SK-N-SH (cell line): ENCODE measurements at regions of chr1 and their contacts with region 1.

Region 1: DNA sequence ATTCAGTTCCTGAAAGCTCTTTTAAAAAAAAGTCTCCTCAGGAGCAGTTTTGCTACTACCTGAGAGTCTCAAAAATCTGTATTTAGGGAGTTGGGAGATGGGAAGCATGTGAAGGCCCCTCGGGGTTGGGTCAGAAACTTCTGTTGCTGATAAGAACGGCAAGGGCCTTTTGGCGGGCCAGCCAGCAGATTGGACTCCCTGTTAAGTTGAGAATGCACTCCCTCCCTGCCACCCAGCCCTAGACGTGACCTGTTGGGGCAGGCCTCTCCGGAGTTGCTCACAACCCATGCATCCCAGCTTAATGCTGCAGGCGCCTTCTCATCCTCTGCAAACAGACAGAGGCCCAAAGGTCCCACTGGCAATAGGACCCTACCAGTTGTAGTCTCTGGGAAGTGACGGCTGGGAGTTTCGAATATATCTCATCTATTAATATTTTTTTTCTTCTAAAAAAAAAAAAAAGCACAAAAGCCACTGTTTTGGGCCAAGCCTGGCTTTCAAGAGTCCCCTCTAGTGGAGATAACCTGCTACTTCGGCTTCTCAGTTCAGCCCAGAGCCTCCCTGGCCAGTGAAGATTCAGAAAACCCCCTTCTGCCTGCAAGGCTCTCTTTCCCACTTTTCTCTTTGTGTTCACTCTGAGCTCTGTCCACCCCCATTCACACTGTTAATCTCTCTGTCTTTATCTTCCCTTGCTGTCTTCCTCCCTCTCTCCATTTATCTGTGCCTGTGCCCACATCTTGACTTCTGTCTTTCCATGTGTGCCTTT is 5.3 kb downstream of the PLXNA2 start:
- DNase-seq: peak; percentile 74
- H3K4me3 ChIP-seq: peak overlapping the region in 1 of 2 experiments; percentile 20; a peak in 1 of 4 replicates
- H3K27ac ChIP-seq: peak overlapping the region; percentile 30 to 42; a peak in 3 of 4 replicates
- H3K4me1 ChIP-seq: peaks cover 30 to 64% of the 10 kb centered on the region in 2 experiments; a peak in 3 of 4 replicates
- H3K27me3 ChIP-seq: no peaks in the 10 kb centered on the region
- CTCF ChIP-seq: peak; percentile 84
- EP300 ChIP-seq: no peak
- RAD21 ChIP-seq: peak; percentile 80

Region 2: DNA sequence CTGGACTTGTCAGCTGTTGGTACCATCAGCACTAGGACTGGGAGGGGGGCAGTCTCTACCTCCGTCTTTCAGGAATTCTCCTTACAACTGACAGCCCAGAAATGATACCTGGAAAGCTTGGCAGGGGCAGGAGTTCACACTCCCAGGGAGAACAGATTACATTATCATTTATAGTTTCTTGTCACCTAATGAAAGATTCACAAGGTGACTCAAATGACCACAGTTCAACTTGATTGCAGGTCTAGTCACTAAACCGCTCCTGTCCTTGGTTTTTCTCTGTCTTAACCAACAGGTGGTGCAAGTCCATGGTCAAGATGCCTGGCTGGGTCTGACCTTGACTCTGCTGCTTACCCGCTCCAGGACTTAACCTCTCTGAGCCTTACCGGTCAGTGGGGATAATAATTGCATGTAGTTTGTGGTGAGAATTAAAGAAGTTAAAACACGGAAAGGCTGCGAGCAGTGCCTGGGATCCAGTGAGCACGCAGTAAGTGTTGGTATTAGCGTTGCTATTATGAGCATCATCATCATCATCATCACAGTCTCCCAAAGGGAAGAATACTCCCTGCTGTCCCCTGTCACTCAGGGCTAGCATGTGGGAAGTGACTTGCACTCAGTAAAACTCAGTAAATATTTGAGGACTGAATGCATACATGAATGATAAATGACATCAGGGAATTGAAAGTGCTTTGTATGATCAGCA is 202.6 kb before region 1 on chr1:
- CTCF ChIA-PET with region 1: interaction called, 579 read pairs
- POLR2A ChIA-PET with region 1: no interaction called
- DNase-seq: peak; percentile 58
- H3K4me3 ChIP-seq: no peak overlapping the region
- H3K27ac ChIP-seq: no peak overlapping the region
- H3K4me1 ChIP-seq: peaks cover 0 to 4% of the 10 kb centered on the region in 2 experiments; a peak in 1 of 4 replicates
- H3K27me3 ChIP-seq: no peaks in the 10 kb centered on the region
- CTCF ChIP-seq: peak; percentile 42
- EP300 ChIP-seq: no peak
- RAD21 ChIP-seq: peak; percentile 60

Region 3: DNA sequence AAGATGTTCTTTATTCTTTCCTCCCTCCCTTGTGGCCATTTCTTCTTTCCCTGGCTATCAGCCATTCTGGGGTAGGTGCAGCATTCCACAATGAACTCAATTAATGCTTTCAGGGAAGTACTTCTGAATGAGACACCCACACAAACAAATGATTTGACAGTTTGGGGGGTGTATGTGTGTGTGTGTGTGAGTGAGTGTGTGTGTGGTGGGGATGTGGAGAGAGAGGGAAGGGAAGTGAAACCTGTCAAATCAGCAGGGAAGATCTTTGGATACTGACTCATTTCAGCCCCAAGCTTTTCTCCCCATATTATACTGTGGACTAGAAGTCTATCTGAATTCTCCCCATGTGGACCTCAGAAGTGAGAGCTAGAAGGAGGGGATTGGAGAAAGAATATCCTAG is 173.0 kb before region 1 on chr1:
- CTCF ChIA-PET with region 1: interaction called, 15 read pairs
- POLR2A ChIA-PET with region 1: no interaction called
- DNase-seq: no peak
- H3K4me3 ChIP-seq: no peak overlapping the region
- H3K27ac ChIP-seq: no peak overlapping the region
- H3K4me1 ChIP-seq: peaks cover 0 to 19% of the 10 kb centered on the region in 2 experiments; a peak in 2 of 4 replicates
- H3K27me3 ChIP-seq: no peaks in the 10 kb centered on the region
- CTCF ChIP-seq: no peak
- EP300 ChIP-seq: no peak
- RAD21 ChIP-seq: no peak

Region 4: GRCh38 chr1:208122612-208123358 is 116.1 kb before region 1 on chr1:
- CTCF ChIA-PET with region 1: interaction called, 95 read pairs
- POLR2A ChIA-PET with region 1: no interaction called
- DNase-seq: no peak
- H3K4me3 ChIP-seq: no peak overlapping the region
- H3K27ac ChIP-seq: peak overlapping the region in 1 of 2 experiments; percentile 14; a peak in 1 of 4 replicates
- H3K4me1 ChIP-seq: peaks cover 6 to 14% of the 10 kb centered on the region in 2 experiments; a peak in 3 of 4 replicates
- H3K27me3 ChIP-seq: no peaks in the 10 kb centered on the region
- CTCF ChIP-seq: no peak
- EP300 ChIP-seq: no peak
- RAD21 ChIP-seq: no peak

Region 5: DNA sequence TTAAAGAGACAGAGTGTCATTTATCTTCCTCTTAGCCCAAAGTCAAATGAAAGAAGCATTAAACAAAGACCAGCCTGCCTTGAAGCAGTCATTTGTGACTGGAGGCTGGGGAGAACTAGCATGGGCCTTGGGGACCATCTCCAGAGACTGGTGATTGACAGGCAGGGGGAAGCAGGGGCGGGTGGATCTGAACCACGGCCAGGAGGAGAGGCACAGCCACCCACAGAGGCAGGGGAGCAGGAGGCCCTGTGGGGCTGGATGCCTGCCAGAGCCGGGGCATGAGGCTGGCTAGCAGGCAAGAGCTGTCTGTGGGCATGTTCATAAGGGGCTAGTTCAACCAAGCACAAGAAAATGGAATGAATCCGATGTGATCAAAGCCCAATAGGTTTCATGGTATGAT is 68.6 kb before region 1 on chr1:
- CTCF ChIA-PET with region 1: interaction called, 15 read pairs
- POLR2A ChIA-PET with region 1: no interaction called
- DNase-seq: peak; percentile 70
- H3K4me3 ChIP-seq: no peak overlapping the region
- H3K27ac ChIP-seq: peak overlapping the region in 1 of 2 experiments; percentile 30; a peak in 1 of 4 replicates
- H3K4me1 ChIP-seq: peaks cover 20 to 65% of the 10 kb centered on the region in 2 experiments
- H3K27me3 ChIP-seq: no peaks in the 10 kb centered on the region
- CTCF ChIP-seq: no peak
- EP300 ChIP-seq: 0 out of 4 replicates have a peak, but pooled peaks of 1 of the 2 experiments have one; percentile 22
- RAD21 ChIP-seq: no peak

Region 6: DNA sequence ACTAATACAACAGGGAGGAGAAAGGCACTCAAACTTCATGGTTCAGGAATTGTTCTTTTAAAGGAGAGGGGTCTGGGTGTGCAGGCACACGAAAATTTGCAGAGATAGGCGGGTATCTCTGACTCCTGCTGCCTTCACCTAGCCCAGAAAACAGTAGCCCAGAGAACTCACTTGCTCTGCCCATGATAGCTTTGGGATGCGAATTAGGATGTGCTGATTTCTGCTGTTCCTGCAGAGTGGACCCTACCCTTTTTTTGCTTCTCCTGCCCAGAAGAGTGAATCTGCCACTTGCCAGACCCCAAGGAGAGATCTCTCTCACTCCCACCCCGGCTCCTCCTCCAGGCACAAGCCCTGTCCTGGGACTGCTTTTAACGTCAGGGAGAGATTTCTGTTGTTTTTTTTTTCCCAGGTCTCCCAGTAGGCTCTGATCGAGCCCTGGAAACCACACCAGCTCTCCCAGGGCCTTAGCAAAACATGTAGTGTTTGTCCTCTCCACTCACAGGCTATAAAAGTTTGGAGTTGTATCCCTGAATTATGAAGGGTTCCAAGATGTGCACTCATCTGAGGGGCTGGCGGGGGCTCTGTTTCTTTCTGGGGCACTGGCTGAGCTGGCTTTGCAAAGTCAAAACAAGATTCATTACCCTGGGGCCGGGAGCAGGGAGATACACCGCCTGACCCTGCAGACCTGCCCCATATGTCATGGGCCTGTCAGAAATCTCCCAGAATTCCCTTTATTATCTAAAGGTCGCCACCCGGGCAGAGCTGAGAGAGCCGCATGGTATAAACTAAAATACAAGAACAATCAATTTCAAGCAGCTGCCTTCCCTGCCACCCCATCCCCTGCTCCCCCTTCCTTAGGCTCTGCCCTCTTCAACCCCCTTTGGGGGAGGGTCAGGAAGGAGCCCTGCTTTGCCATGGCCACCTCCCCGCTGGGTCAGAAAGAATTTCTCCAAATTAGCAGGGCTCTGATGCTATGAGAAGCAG is 12.6 kb before region 1 on chr1:
- CTCF ChIA-PET with region 1: interaction called, 12 read pairs
- POLR2A ChIA-PET with region 1: no interaction called
- DNase-seq: no peak
- H3K4me3 ChIP-seq: no peak overlapping the region
- H3K27ac ChIP-seq: peak overlapping the region in 1 of 2 experiments; percentile 48; a peak in 2 of 4 replicates
- H3K4me1 ChIP-seq: peaks cover 11 to 29% of the 10 kb centered on the region in 2 experiments
- H3K27me3 ChIP-seq: no peaks in the 10 kb centered on the region
- CTCF ChIP-seq: no peak
- EP300 ChIP-seq: no peak
- RAD21 ChIP-seq: no peak

Region 7: GRCh38 chr1:208270651-208271111 is 31.8 kb after region 1 on chr1:
- CTCF ChIA-PET with region 1: no interaction called
- POLR2A ChIA-PET with region 1: no interaction called
- DNase-seq: no peak
- H3K4me3 ChIP-seq: no peak overlapping the region
- H3K27ac ChIP-seq: no peak overlapping the region
- H3K4me1 ChIP-seq: peaks cover 0 to 68% of the 10 kb centered on the region in 2 experiments; a peak in 2 of 4 replicates
- H3K27me3 ChIP-seq: peaks cover 38% of the 10 kb centered on the region; the same call in 1 of the 2 replicates
- CTCF ChIP-seq: no peak
- EP300 ChIP-seq: no peak
- RAD21 ChIP-seq: no peak

Region 8: GRCh38 chr1:209062863-209063262 is 824.0 kb after region 1 on chr1:
- CTCF ChIA-PET with region 1: no interaction called
- POLR2A ChIA-PET with region 1: no interaction called
- DNase-seq: no peak
- H3K4me3 ChIP-seq: no peak overlapping the region
- H3K27ac ChIP-seq: peak overlapping the region in 1 of 2 experiments; percentile 78; a peak in 2 of 4 replicates
- H3K4me1 ChIP-seq: peaks cover 0 to 36% of the 10 kb centered on the region in 2 experiments; a peak in 2 of 4 replicates
- H3K27me3 ChIP-seq: no peaks in the 10 kb centered on the region
- CTCF ChIP-seq: no peak
- EP300 ChIP-seq: no peak
- RAD21 ChIP-seq: no peak

Region 9: DNA sequence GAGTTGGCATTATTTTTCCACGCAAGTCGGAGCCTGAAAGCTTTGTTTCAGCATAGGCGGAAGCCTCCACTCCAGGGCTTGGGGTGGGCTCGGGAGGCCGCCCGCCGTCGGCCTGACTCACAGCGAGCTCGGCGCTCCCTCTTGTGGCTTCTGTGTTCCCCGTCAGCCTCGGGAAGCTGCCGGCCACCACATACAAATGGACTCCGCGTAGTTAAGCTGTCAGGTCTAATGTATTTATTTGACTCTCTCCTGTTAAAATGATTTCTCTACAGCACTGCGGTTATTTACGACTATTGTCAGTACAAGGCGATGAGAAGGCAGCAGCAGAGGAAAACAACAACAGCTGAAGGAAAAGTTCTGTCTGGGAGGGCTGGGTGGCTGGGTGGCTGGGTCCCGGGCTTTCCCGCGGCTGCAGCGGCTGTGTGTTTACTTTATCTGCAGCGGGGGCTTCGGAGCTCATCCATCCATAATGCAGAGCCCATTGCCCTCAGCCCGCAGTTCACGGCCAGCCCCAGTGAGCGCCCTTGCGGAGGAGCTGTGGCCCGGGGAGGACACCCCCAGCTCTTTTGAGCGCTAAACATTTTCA is 968.9 kb after region 1 on chr1:
- CTCF ChIA-PET with region 1: interaction called, 40 read pairs
- POLR2A ChIA-PET with region 1: no interaction called
- DNase-seq: peak; percentile 87
- H3K4me3 ChIP-seq: peak overlapping the region; percentile 38 to 49
- H3K27ac ChIP-seq: peak overlapping the region in 1 of 2 experiments; percentile 71; a peak in 2 of 4 replicates
- H3K4me1 ChIP-seq: peaks cover 0 to 23% of the 10 kb centered on the region in 2 experiments; a peak in 3 of 4 replicates
- H3K27me3 ChIP-seq: no peaks in the 10 kb centered on the region
- CTCF ChIP-seq: peak; percentile 87
- EP300 ChIP-seq: no peak
- RAD21 ChIP-seq: peak; percentile 92